ENCODE measurements at regions of chr15 and their contacts with region 1.

Region 1: GRCh38 chr15:66386204-66387123 is at the start of gene MAP2K1:
- DNase-seq: peak; percentile 82 to 98
- H3K4me3 ChIP-seq: peak within 1 kb of the TSS; percentile 62
- H3K27ac ChIP-seq: peak within 1 kb of the TSS; percentile 55
- H3K4me1 ChIP-seq: peaks cover 19% of the 10 kb centered on the region
- H3K27me3 ChIP-seq: no peaks in the 10 kb centered on the region
- CTCF ChIP-seq: no peak; the same call in 1 of the 2 replicates
- total RNA-seq, gene MAP2K1: 78.6 and 95.5 TPM in 2 replicates

Region 2: GRCh38 chr15:66298803-66299251 is 87.6 kb before region 1 on chr15:
- CTCF ChIA-PET with region 1: no interaction called
- POLR2A ChIA-PET with region 1: no interaction called
- intact Hi-C with region 1: no loop called
- DNase-seq: no peak
- H3K4me3 ChIP-seq: no peak overlapping the region
- H3K27ac ChIP-seq: no peak overlapping the region
- H3K4me1 ChIP-seq: peaks cover 16% of the 10 kb centered on the region
- H3K27me3 ChIP-seq: no peaks in the 10 kb centered on the region
- CTCF ChIP-seq: no peak

Region 3: DNA sequence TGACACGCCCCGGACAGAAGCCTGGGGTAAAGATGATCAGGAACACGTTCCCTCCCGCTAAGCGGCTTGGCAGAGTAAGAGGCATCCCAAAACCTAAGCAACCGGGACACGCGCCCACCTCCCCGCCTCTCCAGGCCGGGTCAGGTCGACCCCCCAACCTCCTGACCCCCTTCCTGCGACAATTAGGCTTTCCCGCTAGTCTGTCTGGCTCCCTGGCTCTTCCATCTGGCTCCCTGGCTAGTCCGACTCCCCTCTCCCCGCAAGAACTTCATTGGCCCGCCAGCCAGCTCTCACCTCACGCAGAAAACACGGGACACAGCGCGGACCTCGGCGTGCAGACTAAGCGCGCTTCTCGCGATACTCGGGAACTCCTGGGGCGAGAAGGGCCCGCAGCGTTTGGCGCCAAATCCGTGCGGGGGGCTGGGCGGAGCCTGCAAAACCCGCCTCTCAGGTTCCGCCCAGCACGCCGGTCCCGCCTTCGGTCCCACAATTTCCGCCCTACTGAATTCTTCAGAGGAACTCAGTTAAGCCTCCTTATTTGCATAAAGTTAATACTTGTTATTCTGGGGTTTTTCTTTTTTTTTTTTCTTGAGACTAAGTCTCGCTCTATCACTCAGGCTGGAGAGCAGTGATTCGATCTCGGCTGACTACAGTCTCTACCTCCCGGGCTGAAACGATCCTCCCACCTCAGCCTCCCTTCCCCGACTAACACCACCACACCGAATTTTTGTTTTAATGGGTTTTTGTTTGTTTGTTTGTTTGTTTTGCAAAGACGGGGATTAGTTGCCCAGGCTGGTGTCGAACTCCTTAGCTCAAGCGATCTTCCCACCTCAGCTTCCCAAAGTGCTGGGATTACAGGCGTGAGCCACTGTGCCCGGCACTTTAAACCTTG is 29.9 kb before region 1 on chr15 and contains the start of gene TIPIN:
- CTCF ChIA-PET with region 1: no interaction called
- POLR2A ChIA-PET with region 1: interaction called, 3 read pairs
- intact Hi-C with region 1: loop called (anchors 1 kb)
- DNase-seq: peak; percentile 76 to 95
- H3K4me3 ChIP-seq: peak within 1 kb of the TSS; percentile 68
- H3K27ac ChIP-seq: 0 out of 2 replicates have a peak within 1 kb of the TSS, but pooled peaks have one; percentile 1
- H3K4me1 ChIP-seq: peaks cover 26% of the 10 kb centered on the region
- H3K27me3 ChIP-seq: no peaks in the 10 kb centered on the region
- CTCF ChIP-seq: no peak
- total RNA-seq, gene TIPIN: 12.9 and 13.1 TPM in 2 replicates

Region 4: DNA sequence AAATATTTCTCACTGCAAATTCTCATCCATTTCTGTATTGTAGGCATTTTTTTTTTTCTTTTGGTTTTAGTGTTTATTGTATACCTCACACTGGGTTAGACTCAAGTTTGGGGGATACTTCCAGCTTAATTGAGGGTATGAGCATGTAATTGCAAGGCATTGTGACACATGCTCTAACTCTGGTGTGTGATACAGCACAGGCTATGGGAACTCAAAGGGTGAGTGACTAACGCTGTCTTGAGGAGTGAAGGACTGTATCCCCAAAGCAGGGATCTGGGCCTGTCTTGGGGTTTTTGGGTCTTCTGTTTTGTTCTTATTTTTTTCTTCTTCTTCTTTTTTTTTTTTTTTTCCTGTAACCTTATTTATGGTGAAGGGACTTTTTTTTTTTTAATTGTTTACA is 27.1 kb after region 1 on chr15:
- CTCF ChIA-PET with region 1: no interaction called
- POLR2A ChIA-PET with region 1: interaction called, 12 read pairs
- intact Hi-C with region 1: no loop called
- DNase-seq: no peak
- H3K4me3 ChIP-seq: no peak overlapping the region
- H3K27ac ChIP-seq: no peak overlapping the region
- H3K4me1 ChIP-seq: no peaks in the 10 kb centered on the region
- H3K27me3 ChIP-seq: no peaks in the 10 kb centered on the region
- CTCF ChIP-seq: no peak

Region 5: DNA sequence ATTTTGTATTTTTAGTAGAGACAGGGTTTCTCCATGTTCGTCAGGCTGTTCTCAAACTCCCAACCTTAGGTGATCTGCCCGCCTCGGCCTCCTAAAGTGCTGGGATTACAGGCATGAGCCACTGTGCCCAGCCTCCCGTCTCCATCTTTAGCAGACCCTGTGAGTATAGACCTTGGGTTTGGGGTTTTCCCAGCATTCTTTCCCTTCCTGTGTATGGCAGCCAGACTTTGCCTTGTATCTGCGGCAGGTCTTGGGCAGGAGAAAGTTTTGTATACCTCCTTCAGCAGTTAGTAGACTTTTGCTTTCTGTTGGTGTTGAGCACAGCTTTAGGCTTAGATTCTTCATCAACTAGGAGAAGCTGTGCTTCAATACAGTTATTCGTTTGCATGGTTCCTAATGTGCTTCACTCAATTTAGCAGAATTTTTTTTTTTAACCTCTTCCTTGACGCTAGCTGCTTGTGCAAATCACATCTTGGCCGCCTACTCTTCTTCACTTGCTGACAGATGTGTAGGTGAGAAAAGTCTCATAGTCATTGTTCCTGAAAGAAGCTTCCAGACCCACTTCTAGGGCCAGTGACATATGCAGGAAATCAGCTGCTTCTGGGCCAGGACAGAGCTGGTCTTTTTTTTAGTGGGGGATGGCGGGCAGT is 38.6 kb after region 1 on chr15:
- CTCF ChIA-PET with region 1: no interaction called
- POLR2A ChIA-PET with region 1: no interaction called
- intact Hi-C with region 1: no loop called
- DNase-seq: no peak
- H3K4me3 ChIP-seq: no peak overlapping the region
- H3K27ac ChIP-seq: no peak overlapping the region
- H3K4me1 ChIP-seq: no peaks in the 10 kb centered on the region
- H3K27me3 ChIP-seq: no peaks in the 10 kb centered on the region
- CTCF ChIP-seq: no peak

Region 6: DNA sequence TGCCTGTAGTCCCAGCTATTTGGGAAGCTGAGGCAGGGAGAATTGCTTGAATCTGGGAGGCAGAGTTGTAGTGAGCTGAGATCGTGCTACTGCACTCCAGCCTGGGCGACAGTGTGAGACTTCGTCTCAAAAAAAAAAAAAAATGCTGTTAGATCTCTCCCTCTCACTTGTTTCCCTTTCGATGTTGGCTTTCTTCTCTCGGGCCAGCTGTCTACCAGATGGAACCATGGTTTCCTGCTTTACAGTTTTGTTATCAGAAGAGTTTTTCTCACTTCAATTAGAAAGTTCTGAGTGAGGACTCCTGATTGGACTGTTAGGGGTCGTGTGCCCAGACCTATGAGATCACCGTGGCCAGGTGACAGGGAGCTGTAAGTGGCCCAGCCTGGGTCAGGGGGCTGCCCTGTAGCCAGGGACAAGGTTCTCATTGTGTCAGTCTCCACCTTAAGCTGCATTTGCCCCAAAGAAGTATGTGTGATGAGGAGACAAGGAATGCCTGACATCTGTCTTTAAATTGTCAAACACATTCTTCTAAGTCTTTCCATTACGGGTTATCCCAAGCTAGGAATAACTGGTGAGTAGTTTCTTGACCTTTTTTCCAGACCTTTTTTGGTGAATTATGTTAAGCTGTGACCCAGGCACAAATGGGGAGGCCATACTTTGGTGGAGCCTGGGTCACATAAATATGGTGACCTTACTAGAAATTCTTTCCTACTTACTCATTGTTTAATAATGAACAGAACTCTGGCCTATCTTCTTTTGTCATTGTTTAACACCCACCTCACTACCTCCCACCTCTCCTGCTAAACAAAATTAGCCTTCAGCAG is 85.9 kb after region 1 on chr15:
- CTCF ChIA-PET with region 1: interaction called, 11 read pairs
- POLR2A ChIA-PET with region 1: interaction called, 20 read pairs
- intact Hi-C with region 1: no loop called
- DNase-seq: peak in 1 of 2 experiments; percentile 34
- H3K4me3 ChIP-seq: no peak overlapping the region
- H3K27ac ChIP-seq: no peak overlapping the region
- H3K4me1 ChIP-seq: no peaks in the 10 kb centered on the region; the same call in 1 of the 2 replicates
- H3K27me3 ChIP-seq: no peaks in the 10 kb centered on the region
- CTCF ChIP-seq: no peak

Region 7: GRCh38 chr15:66535016-66535415 is 148.6 kb after region 1 on chr15:
- CTCF ChIA-PET with region 1: no interaction called
- POLR2A ChIA-PET with region 1: no interaction called
- intact Hi-C with region 1: no loop called
- DNase-seq: no peak
- H3K4me3 ChIP-seq: no peak overlapping the region
- H3K27ac ChIP-seq: no peak overlapping the region
- H3K4me1 ChIP-seq: no peaks in the 10 kb centered on the region
- H3K27me3 ChIP-seq: no peaks in the 10 kb centered on the region
- CTCF ChIP-seq: no peak